ENCODE measurements at regions of chr5 and their contacts with region 1.

Region 1: DNA sequence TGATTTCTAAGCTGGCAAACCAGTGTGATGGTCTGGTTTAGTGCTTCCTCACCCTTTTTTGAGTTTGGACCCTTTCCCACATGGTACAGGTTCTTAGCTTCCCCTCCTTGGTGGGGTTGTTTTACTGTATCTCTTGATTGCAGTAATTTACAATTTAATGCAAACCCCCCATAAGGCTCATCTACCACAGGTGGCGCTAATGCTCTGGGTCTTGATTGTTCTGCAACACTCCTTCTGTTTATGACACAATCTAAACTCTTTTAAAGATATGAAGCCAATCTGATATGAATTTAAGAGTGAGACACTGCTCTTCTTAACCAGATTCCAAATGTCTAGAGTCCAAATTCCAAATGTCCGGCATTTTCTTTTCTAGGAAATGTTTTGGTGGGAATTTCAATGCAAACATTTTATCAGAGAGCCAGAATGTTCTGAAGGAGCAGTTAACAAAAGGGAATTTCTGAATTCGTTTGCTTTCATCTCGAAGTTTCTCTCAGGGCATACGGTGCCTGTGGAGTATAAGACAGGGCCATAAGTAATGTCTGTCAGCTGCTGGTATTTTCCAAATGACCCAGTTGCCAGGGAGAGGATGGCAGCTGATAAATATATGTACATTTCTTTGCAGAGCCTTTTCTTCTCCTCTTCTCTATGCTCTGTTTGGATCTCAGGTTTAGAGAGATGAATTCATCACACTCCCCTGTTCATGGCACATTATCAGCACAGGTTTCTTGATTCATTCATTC is 246.8 kb downstream of the ARHGAP26 start:
- DNase-seq: no peak
- ATAC-seq: peak; percentile 28
- H3K4me3 ChIP-seq: no peak overlapping the region
- H3K27ac ChIP-seq: no peak overlapping the region
- H3K4me1 ChIP-seq: peaks cover 32% of the 10 kb centered on the region
- H3K27me3 ChIP-seq: no peaks in the 10 kb centered on the region
- CTCF ChIP-seq: peak; percentile 68 to 75 (median 72)
- EP300 ChIP-seq: peak in 1 of 2 experiments; percentile 8; a peak in 1 of 4 replicates
- POLR2A ChIP-seq: no peak
- RAD21 ChIP-seq: peak; percentile 88

Region 2: DNA sequence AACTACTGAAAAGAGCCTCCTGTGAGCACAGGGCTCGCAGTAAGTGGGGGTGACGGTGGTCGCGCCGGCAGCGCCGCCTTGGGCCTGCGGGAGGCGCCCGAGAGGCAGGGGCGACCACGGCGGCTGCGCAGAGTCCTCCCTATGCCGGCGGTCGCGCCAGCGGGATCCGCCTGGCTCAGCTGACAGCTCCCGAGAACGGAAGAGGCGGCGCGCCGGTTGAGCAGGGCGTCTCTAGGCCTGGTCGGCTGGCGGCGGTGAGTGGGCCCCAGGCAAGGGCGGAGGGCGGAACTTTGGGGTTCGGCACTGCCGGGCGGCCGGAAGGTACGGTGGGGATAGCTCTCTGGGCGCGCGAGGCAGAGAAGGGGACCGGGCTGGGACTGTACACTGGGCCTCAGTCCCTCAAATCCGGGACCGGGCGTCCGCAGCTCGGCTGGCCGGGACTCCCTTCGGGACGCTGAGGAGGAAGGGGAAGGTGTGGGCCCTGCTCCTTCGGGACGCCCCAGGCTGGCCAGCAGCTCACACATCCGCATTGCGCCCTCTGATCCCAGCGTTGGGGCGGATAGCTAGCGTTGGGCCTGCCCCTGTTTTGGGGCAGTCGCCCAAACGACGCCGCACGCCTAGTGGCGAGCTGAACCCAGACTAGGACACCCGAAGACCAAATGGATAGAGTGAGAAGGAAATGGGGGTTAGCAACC is 1047.9 kb before region 1 on chr5 and contains the start of gene RNF14:
- CTCF ChIA-PET with region 1: no interaction called
- POLR2A ChIA-PET with region 1: no interaction called
- RAD21 ChIA-PET with region 1: no interaction called
- SMC1A ChIA-PET with region 1: no interaction called
- in situ Hi-C with region 1: no loop called
- intact Hi-C with region 1: no loop called
- DNase-seq: peak; percentile 74
- ATAC-seq: peak; percentile 95
- H3K4me3 ChIP-seq: peak within 1 kb of the TSS; percentile 73
- H3K27ac ChIP-seq: peak within 1 kb of the TSS; percentile 96
- H3K4me1 ChIP-seq: peaks cover 8% of the 10 kb centered on the region
- H3K27me3 ChIP-seq: no peaks in the 10 kb centered on the region
- CTCF ChIP-seq: peak; percentile 84 to 98 (median 95)
- EP300 ChIP-seq: no peak
- POLR2A ChIP-seq: peak; percentile 97
- RAD21 ChIP-seq: no peak
- polyA plus RNA-seq, gene RNF14: 28.1 to 34.4 TPM

Region 3: GRCh38 chr5:143033535-143034250 is 16.7 kb after region 1 on chr5:
- CTCF ChIA-PET with region 1: interaction called, 5 read pairs
- POLR2A ChIA-PET with region 1: interaction called, 6 read pairs
- RAD21 ChIA-PET with region 1: interaction called, 30 read pairs
- SMC1A ChIA-PET with region 1: interaction called, 21 read pairs
- in situ Hi-C with region 1: no loop called
- intact Hi-C with region 1: loop called (anchors 2 kb)
- DNase-seq: no peak
- ATAC-seq: no peak
- H3K4me3 ChIP-seq: no peak overlapping the region
- H3K27ac ChIP-seq: no peak overlapping the region
- H3K4me1 ChIP-seq: peaks cover 23% of the 10 kb centered on the region
- H3K27me3 ChIP-seq: no peaks in the 10 kb centered on the region
- CTCF ChIP-seq: no peak
- EP300 ChIP-seq: no peak
- POLR2A ChIP-seq: no peak
- RAD21 ChIP-seq: no peak

Region 4: GRCh38 chr5:143051244-143052058 is 34.5 kb after region 1 on chr5:
- CTCF ChIA-PET with region 1: interaction called, 12 read pairs
- POLR2A ChIA-PET with region 1: interaction called, 8 read pairs
- RAD21 ChIA-PET with region 1: interaction called, 337 read pairs
- SMC1A ChIA-PET with region 1: interaction called, 92 read pairs
- in situ Hi-C with region 1: no loop called
- intact Hi-C with region 1: loop called (anchors 2 kb)
- DNase-seq: no peak
- ATAC-seq: peak; percentile 10
- H3K4me3 ChIP-seq: no peak overlapping the region
- H3K27ac ChIP-seq: no peak overlapping the region; the same call in 1 of the 2 replicates
- H3K4me1 ChIP-seq: peaks cover 38% of the 10 kb centered on the region
- H3K27me3 ChIP-seq: no peaks in the 10 kb centered on the region
- CTCF ChIP-seq: no peak
- EP300 ChIP-seq: no peak
- POLR2A ChIP-seq: no peak
- RAD21 ChIP-seq: no peak

Region 5: DNA sequence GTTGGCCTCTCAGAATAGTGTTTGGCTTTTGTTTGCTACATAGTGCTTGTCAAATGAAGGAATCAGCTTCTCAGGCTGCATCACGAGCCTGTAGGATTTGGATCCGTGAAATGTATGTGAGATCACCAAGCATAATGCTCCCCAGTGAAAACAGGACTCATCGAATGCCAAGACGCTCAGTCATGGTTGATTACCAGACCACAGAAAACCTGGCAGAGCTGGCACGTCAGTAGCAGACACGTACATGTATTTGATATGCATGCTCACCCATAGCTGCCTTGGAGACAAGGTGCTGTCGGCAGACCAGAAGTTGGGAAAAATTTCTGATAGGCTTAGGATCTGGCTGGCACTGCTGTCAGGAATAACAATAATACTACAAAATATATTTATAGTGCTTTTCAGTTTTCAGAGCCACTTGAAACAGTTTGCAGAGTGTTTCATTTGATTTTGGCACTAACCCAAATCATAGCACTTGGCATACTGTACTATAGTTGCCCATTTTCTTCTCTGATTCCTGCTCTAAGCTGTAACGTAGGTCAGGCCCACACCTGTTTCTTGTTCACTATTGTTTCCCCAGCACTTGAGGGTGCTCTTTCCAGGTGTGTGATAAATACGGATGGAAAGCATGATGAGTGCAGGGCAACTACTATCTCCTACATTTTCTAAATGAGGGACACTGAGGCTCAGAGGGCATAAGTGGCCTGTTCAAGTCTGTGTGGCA is 160.5 kb after region 1 on chr5:
- CTCF ChIA-PET with region 1: interaction called, 4 read pairs
- POLR2A ChIA-PET with region 1: interaction called, 4 read pairs
- RAD21 ChIA-PET with region 1: interaction called, 18 read pairs
- SMC1A ChIA-PET with region 1: interaction called, 17 read pairs
- in situ Hi-C with region 1: no loop called
- intact Hi-C with region 1: no loop called
- DNase-seq: no peak
- ATAC-seq: no peak
- H3K4me3 ChIP-seq: no peak overlapping the region
- H3K27ac ChIP-seq: no peak overlapping the region
- H3K4me1 ChIP-seq: peaks cover 8% of the 10 kb centered on the region
- H3K27me3 ChIP-seq: no peaks in the 10 kb centered on the region
- CTCF ChIP-seq: no peak
- EP300 ChIP-seq: no peak
- POLR2A ChIP-seq: no peak
- RAD21 ChIP-seq: no peak

Region 6: DNA sequence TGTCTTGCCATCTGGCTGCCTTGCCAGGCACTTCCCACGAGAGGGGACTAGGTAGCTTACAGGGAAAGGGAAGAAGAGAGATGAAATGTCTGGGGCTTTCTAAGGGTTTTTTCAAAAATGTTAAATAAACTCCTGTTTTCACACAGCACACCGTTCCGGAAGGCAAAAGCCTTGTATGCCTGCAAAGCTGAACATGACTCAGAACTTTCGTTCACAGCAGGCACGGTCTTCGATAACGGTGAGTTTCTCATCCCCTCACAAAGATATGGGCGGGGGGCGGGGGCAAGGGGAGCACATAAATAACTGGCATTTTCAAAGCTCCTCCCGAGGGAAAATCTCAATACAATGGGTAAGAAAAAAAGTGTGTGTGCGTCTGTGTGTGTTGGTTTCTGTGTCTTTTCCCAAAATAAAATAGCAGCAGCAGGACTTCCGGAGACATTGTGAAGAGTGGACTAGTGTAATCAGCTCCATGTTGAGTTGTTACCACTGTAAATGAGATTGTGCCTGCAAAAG is 197.0 kb after region 1 on chr5:
- CTCF ChIA-PET with region 1: interaction called, 31 read pairs
- POLR2A ChIA-PET with region 1: interaction called, 12 read pairs
- RAD21 ChIA-PET with region 1: interaction called, 53 read pairs
- SMC1A ChIA-PET with region 1: interaction called, 138 read pairs
- in situ Hi-C with region 1: loop called (anchors 5 kb)
- intact Hi-C with region 1: no loop called
- DNase-seq: peak; percentile 97
- ATAC-seq: peak; percentile 68
- H3K4me3 ChIP-seq: peak overlapping the region; percentile 6; the same call in 1 of the 2 replicates
- H3K27ac ChIP-seq: peak overlapping the region; percentile 100
- H3K4me1 ChIP-seq: peaks cover 76% of the 10 kb centered on the region
- H3K27me3 ChIP-seq: no peaks in the 10 kb centered on the region
- CTCF ChIP-seq: peak; percentile 38 to 61 (median 47); a peak in 5 of 6 replicates
- EP300 ChIP-seq: peak; percentile 73 to 82
- POLR2A ChIP-seq: peak; percentile 45
- RAD21 ChIP-seq: peak; percentile 76

Measured in GM12878 (cell line).